Transverse colon (tissue), 4 donors: ENCODE measurements at regions of chr3 and their contacts with region 1.

Region 1: DNA sequence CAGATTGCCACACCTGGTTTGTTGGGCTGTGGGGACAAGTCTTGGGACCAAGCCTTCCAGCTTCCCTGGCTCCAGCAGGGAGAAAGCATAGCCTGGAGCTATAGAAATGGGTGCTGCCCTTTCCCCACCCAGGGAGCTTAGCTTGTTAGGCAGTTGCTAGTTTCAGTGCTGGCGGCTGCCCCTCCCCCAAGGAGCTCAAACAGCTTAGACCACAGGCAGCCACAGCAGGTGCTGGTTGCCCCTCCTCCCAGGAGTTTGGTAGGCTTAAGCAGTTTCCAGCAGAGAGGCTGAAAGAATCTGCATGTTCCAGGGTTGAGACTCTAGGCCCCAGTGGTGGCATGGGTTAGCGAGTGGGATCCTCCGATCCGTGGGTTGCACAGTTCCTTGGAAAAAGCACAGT is 889.7 kb downstream of the IGSF11 start:
- DNase-seq: no peak
- H3K4me3 ChIP-seq: no peak overlapping the region
- H3K27ac ChIP-seq: no peak overlapping the region
- H3K4me1 ChIP-seq: no peaks in the 10 kb centered on the region
- H3K27me3 ChIP-seq: no peaks in the 10 kb centered on the region
- CTCF ChIP-seq: no peak
- EP300 ChIP-seq: no peak
- POLR2A ChIP-seq: no peak

Region 2: DNA sequence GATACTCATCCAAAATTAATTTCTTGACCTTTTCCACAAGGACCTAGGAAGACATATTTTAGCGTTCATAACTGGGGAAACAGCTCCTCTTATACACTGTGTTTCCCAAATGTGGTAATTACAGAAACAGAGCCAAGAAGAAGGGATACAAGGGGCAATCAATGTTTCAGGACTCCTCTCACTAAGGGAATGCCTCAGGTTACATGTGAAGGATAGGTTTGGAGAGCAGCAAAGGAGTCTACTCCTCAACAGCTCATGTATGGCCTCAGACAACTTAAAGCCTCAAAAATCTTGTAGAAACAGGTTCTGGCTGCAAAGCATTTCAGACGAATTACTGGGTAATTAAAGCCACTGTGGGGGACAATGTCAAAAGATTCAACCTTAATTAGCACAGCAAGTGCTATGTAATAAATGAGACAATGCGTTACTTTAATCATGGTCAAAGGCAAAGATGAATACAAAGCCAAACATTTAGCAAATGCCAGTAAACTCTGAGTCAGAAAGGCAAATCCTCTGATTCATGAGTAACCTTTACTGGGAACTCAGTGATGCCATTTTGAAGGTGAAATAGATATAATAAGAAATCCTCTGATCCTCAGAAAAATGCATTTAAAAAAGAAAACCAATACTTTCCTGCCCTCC is 324.1 kb before region 1 on chr3:
- in situ Hi-C with region 1: no loop called
- intact Hi-C with region 1: no loop called
- DNase-seq: no peak
- H3K4me3 ChIP-seq: no peak overlapping the region
- H3K27ac ChIP-seq: no peak overlapping the region
- H3K4me1 ChIP-seq: no peaks in the 10 kb centered on the region
- H3K27me3 ChIP-seq: no peaks in the 10 kb centered on the region
- CTCF ChIP-seq: no peak
- EP300 ChIP-seq: no peak
- POLR2A ChIP-seq: no peak

Region 3: GRCh38 chr3:118029049-118029448 is 115.9 kb before region 1 on chr3:
- in situ Hi-C with region 1: no loop called
- intact Hi-C with region 1: no loop called
- DNase-seq: no peak
- H3K4me3 ChIP-seq: no peak overlapping the region
- H3K27ac ChIP-seq: no peak overlapping the region
- H3K4me1 ChIP-seq: no peaks in the 10 kb centered on the region
- H3K27me3 ChIP-seq: no peaks in the 10 kb centered on the region
- CTCF ChIP-seq: no peak
- EP300 ChIP-seq: no peak
- POLR2A ChIP-seq: no peak

Region 4: GRCh38 chr3:118075873-118076272 is 69.0 kb before region 1 on chr3:
- in situ Hi-C with region 1: no loop called
- intact Hi-C with region 1: loop called (anchors 2 kb)
- DNase-seq: no peak
- H3K4me3 ChIP-seq: no peak overlapping the region
- H3K27ac ChIP-seq: no peak overlapping the region
- H3K4me1 ChIP-seq: no peaks in the 10 kb centered on the region
- H3K27me3 ChIP-seq: no peaks in the 10 kb centered on the region
- CTCF ChIP-seq: no peak
- EP300 ChIP-seq: no peak
- POLR2A ChIP-seq: no peak

Region 5: GRCh38 chr3:119322835-119323722 is 1178.2 kb after region 1 on chr3:
- in situ Hi-C with region 1: no loop called
- intact Hi-C with region 1: no loop called
- DNase-seq: peak; percentile 89
- H3K4me3 ChIP-seq: peak overlapping the region; percentile 50 to 68 (median 60)
- H3K27ac ChIP-seq: peak overlapping the region; percentile 87 to 94 (median 92)
- H3K4me1 ChIP-seq: peaks cover 3 to 22% (median 8%) of the 10 kb centered on the region in 4 donors
- H3K27me3 ChIP-seq: no peaks in the 10 kb centered on the region
- CTCF ChIP-seq: no peak
- EP300 ChIP-seq: peak; percentile 50
- POLR2A ChIP-seq: peak; percentile 69